T-cell (primary cell): ENCODE measurements at regions of chr1 and their contacts with region 1.

Region 1: GRCh38 chr1:116514708-116515525 is 55.9 kb downstream of the CD58 start:
- DNase-seq: peak in 33 of 35 experiments; percentile 34 to 80 (median 55)
- ATAC-seq: peak; percentile 74 to 81 (median 80)
- H3K4me3 ChIP-seq: peak overlapping the region in 1 of 2 donors; percentile 11
- H3K4me3 Mint-ChIP-seq: peak overlapping the region; percentile 58 to 70 (median 61)
- H3K27ac ChIP-seq: peak overlapping the region; percentile 95
- H3K27ac Mint-ChIP-seq: peak overlapping the region; percentile 97 to 98
- H3K4me1 ChIP-seq: peaks cover 18 to 53% of the 10 kb centered on the region in 2 experiments
- H3K4me1 Mint-ChIP-seq: peaks cover 44 to 63% (median 54%) of the 10 kb centered on the region in 3 donors
- H3K27me3 ChIP-seq: no peaks in the 10 kb centered on the region
- H3K27me3 Mint-ChIP-seq: no peaks in the 10 kb centered on the region

Region 2: DNA sequence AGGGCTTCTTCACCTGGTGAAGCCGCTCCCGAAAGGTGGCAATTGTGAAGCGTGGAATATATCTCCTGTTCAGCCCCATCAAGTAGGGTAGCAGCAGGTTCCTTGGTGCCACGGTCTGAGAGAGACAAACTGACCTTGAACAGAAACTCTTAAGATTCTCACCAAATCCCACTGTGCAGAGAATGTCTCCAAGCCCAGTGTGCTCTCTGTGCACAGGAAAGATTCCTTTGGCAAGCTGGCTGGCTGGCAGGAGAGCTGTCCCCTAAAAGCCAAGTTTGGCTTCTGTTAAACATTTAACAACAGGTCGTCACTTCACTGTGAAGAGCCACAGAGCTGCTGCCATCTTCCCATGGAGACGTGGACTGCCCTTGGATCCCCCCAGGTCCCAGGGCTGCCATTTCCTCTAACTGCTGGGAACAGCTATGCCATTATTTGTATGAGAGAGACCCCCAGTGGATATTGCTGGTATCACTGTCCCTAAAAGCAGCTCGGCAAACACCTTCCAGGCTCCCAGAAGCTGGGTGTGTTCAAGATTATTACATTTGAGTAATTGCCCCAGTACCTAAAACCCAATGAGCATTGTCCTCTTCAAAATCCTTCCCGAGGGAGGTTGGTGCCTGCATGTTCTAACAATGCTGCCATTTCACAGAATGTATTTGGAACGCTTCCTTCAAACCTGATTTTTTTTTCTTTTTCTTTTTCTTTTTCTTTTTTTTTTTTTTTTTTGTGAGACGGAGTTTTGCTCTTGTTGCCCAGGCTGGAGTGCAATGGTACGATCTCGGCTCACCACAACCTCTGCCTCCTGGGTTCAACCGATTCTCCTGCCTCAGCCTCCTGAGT is 15.9 kb before region 1 on chr1:
- CTCF ChIA-PET with region 1: interaction called, 4 to 34 read pairs
- POLR2A ChIA-PET with region 1: interaction called in 1 of 2 experiments, 9 read pairs
- DNase-seq: peak in 20 of 35 experiments; percentile 16 to 74 (median 30)
- ATAC-seq: peak; percentile 75 to 83 (median 78)
- H3K4me3 ChIP-seq: no peak overlapping the region
- H3K4me3 Mint-ChIP-seq: no peak overlapping the region
- H3K27ac ChIP-seq: no peak overlapping the region
- H3K27ac Mint-ChIP-seq: peak overlapping the region in 1 of 2 donors; percentile 4
- H3K4me1 ChIP-seq: peaks cover 9 to 29% of the 10 kb centered on the region in 2 experiments
- H3K4me1 Mint-ChIP-seq: peaks cover 23 to 39% (median 34%) of the 10 kb centered on the region in 3 donors
- H3K27me3 ChIP-seq: no peaks in the 10 kb centered on the region
- H3K27me3 Mint-ChIP-seq: no peaks in the 10 kb centered on the region

Region 3: GRCh38 chr1:116504308-116505156 is 10.4 kb before region 1 on chr1:
- CTCF ChIA-PET with region 1: interaction called, 4 to 34 read pairs
- POLR2A ChIA-PET with region 1: interaction called in 1 of 2 experiments, 9 read pairs
- DNase-seq: peak; percentile 59 to 93 (median 84)
- ATAC-seq: peak; percentile 98 to 99 (median 99)
- H3K4me3 ChIP-seq: no peak overlapping the region
- H3K4me3 Mint-ChIP-seq: peak overlapping the region in 2 of 3 donors; percentile 34 to 55
- H3K27ac ChIP-seq: peak overlapping the region; percentile 81
- H3K27ac Mint-ChIP-seq: peak overlapping the region; percentile 90 to 93
- H3K4me1 ChIP-seq: peaks cover 20 to 51% of the 10 kb centered on the region in 2 experiments
- H3K4me1 Mint-ChIP-seq: peaks cover 49 to 70% (median 59%) of the 10 kb centered on the region in 3 donors
- H3K27me3 ChIP-seq: no peaks in the 10 kb centered on the region
- H3K27me3 Mint-ChIP-seq: no peaks in the 10 kb centered on the region

Region 4: DNA sequence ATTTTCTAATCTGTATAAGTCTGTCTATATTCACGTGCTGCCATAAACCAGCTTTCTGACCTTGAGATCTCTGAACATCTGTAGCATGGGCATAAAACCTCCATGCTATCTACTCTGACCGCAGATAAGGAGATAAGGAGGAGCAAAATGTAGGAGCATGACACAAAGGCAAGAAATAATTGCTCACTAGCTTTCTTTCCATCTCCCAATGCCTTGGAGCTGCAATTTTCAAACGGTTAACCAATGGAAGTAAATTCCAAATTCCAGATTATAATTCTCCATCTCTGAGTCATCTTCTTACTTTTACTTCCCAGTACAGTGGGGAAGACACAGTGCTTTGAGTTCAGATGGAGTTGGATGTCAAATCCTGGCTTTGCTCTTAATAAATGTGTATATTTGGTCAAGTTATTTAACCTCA is 14.3 kb after region 1 on chr1:
- CTCF ChIA-PET with region 1: no interaction called
- POLR2A ChIA-PET with region 1: no interaction called
- DNase-seq: no peak
- ATAC-seq: no peak
- H3K4me3 ChIP-seq: no peak overlapping the region
- H3K4me3 Mint-ChIP-seq: no peak overlapping the region
- H3K27ac ChIP-seq: no peak overlapping the region
- H3K27ac Mint-ChIP-seq: no peak overlapping the region
- H3K4me1 ChIP-seq: no peaks in the 10 kb centered on the region
- H3K4me1 Mint-ChIP-seq: peaks cover 0 to 3% (median 2%) of the 10 kb centered on the region in 3 donors
- H3K27me3 ChIP-seq: no peaks in the 10 kb centered on the region
- H3K27me3 Mint-ChIP-seq: no peaks in the 10 kb centered on the region